HepG2 (cell line): ENCODE measurements at regions of chr12 and their contacts with region 1.

Region 1: DNA sequence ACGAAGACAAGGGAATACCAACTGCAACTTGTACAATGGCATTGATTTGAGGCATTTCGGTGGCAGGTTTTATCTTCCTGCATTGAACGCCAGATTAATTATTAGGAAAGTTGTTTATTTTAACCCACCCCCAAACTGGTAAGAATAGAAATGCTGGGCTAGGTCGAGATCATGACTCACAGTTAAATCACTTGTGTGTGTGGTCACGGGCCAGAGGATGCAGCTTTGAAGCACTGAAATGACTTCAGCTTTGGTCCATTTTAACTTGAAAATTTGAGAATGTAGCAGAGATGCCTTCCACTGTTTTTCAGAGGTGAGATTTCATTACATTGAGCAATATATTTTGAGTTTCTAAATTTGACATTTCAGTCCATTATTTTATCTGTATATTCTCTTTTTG is 23.6 kb upstream of the KCNH3 start:
- DNase-seq: no peak
- ATAC-seq: no peak
- H3K4me3 ChIP-seq: no peak overlapping the region
- H3K27ac ChIP-seq: no peak overlapping the region
- H3K4me1 ChIP-seq: peaks cover 16% of the 10 kb centered on the region
- H3K27me3 ChIP-seq: no peaks in the 10 kb centered on the region
- CTCF ChIP-seq: no peak
- EP300 ChIP-seq: no peak
- POLR2A ChIP-seq: no peak
- RAD21 ChIP-seq: no peak

Region 2: DNA sequence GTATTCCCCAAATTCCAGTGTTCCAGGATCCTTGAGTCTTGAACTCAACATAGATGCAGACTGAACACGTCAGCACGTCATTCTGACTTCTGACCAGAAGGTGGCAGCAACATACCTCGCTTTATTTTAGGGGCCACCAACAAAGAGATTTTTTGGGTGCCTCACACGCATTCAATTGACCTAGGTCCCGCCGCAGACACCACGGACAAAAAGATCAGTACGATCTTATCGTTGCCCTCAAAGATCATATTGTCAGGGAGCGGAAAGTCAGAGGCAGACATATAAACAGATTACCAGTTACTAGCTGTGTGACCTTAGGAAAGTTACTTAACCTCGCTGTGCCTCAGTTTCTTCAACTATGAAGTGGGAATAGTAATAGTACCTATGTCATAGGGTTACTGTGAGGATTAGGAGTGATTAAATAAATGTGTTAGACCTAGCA is 226.8 kb before region 1 on chr12:
- CTCF ChIA-PET with region 1: no interaction called
- POLR2A ChIA-PET with region 1: no interaction called
- in situ Hi-C with region 1: no loop called
- intact Hi-C with region 1: loop called (anchors 2 kb)
- DNase-seq: peak; percentile 34
- ATAC-seq: peak; percentile 25; the same call in 1 of the 3 replicates
- H3K4me3 ChIP-seq: no peak overlapping the region
- H3K27ac ChIP-seq: no peak overlapping the region
- H3K4me1 ChIP-seq: peaks cover 24% of the 10 kb centered on the region
- H3K27me3 ChIP-seq: peaks cover 1 to 48% of the 10 kb centered on the region in 2 experiments
- CTCF ChIP-seq: peak; percentile 84
- EP300 ChIP-seq: no peak
- POLR2A ChIP-seq: no peak
- RAD21 ChIP-seq: peak; percentile 55; the same call in 1 of the 2 replicates

Region 3: DNA sequence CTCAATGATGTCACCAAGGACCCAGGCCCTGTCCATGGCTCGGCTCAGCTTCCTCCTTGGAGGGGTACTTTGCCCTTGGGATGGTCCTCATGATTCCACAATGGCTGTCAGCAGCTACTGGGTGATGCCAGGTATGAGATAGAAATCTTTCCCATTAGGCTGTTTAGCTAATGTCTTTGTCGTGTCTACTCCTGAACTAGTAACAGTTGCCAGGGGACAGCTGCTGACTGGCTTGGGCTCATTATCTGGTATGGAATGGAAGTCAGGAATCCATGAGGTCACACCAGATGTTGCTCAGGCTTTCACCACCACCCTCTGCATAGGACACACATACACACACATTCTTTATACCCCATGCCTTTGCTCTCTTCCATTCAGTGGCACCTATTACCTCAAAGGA is 211.1 kb before region 1 on chr12:
- CTCF ChIA-PET with region 1: no interaction called
- POLR2A ChIA-PET with region 1: no interaction called
- in situ Hi-C with region 1: no loop called
- intact Hi-C with region 1: no loop called
- DNase-seq: no peak
- ATAC-seq: peak; percentile 48; the same call in 2 of the 3 replicates
- H3K4me3 ChIP-seq: no peak overlapping the region
- H3K27ac ChIP-seq: no peak overlapping the region
- H3K4me1 ChIP-seq: peaks cover 13% of the 10 kb centered on the region
- H3K27me3 ChIP-seq: peaks cover 0 to 4% of the 10 kb centered on the region in 2 experiments; a peak in 3 of 5 replicates
- CTCF ChIP-seq: no peak
- EP300 ChIP-seq: no peak
- POLR2A ChIP-seq: no peak
- RAD21 ChIP-seq: no peak

Region 4: GRCh38 chr12:49331380-49332222 is 183.7 kb before region 1 on chr12:
- CTCF ChIA-PET with region 1: interaction called, 16 read pairs
- POLR2A ChIA-PET with region 1: no interaction called
- in situ Hi-C with region 1: no loop called
- intact Hi-C with region 1: no loop called
- DNase-seq: peak; percentile 53
- ATAC-seq: peak; percentile 89
- H3K4me3 ChIP-seq: no peak overlapping the region
- H3K27ac ChIP-seq: no peak overlapping the region
- H3K4me1 ChIP-seq: peaks cover 21% of the 10 kb centered on the region
- H3K27me3 ChIP-seq: peaks cover 0 to 12% of the 10 kb centered on the region in 2 experiments; a peak in 3 of 5 replicates
- CTCF ChIP-seq: peak; percentile 88
- EP300 ChIP-seq: no peak
- POLR2A ChIP-seq: no peak
- RAD21 ChIP-seq: peak; percentile 84